CD4-positive, alpha-beta T cell (primary cell): ENCODE measurements at regions of chr1 and their contacts with region 1.

Region 1: GRCh38 chr1:179229214-179230140 is at the start of gene ABL2:
- DNase-seq: peak; percentile 11 to 74 (median 45)
- ATAC-seq: peak; percentile 63
- H3K4me3 ChIP-seq: peak within 1 kb of the TSS; percentile 57
- H3K4me3 Mint-ChIP-seq: peak within 1 kb of the TSS; percentile 98
- H3K27ac ChIP-seq: peak within 1 kb of the TSS in 1 of 2 donors; percentile 57
- H3K27ac Mint-ChIP-seq: peak within 1 kb of the TSS; percentile 82
- H3K4me1 ChIP-seq: peaks cover 11% of the 10 kb centered on the region
- H3K4me1 Mint-ChIP-seq: peaks cover 35% of the 10 kb centered on the region
- H3K27me3 ChIP-seq: no peaks in the 10 kb centered on the region
- H3K27me3 Mint-ChIP-seq: no peaks in the 10 kb centered on the region
- CTCF ChIP-seq: no peak
- total RNA-seq, gene ABL2: 15.8 to 16.4 TPM

Region 2: GRCh38 chr1:178397678-178398077 is 831.8 kb before region 1 on chr1:
- CTCF ChIA-PET with region 1: no interaction called
- POLR2A ChIA-PET with region 1: no interaction called
- intact Hi-C with region 1: no loop called
- DNase-seq: no peak
- ATAC-seq: no peak
- H3K4me3 ChIP-seq: no peak overlapping the region
- H3K4me3 Mint-ChIP-seq: no peak overlapping the region
- H3K27ac ChIP-seq: no peak overlapping the region
- H3K27ac Mint-ChIP-seq: no peak overlapping the region
- H3K4me1 ChIP-seq: no peaks in the 10 kb centered on the region
- H3K4me1 Mint-ChIP-seq: no peaks in the 10 kb centered on the region
- H3K27me3 ChIP-seq: no peaks in the 10 kb centered on the region
- H3K27me3 Mint-ChIP-seq: peaks cover 5% of the 10 kb centered on the region
- CTCF ChIP-seq: no peak

Region 3: GRCh38 chr1:178725603-178726517 is 503.6 kb before region 1 on chr1:
- CTCF ChIA-PET with region 1: no interaction called
- POLR2A ChIA-PET with region 1: no interaction called
- intact Hi-C with region 1: loop called in 1 of 2 experiments (anchors 10 kb)
- DNase-seq: peak; percentile 23 to 85 (median 57)
- ATAC-seq: peak; percentile 84
- H3K4me3 ChIP-seq: peak overlapping the region; percentile 71
- H3K4me3 Mint-ChIP-seq: peak overlapping the region; percentile 93
- H3K27ac ChIP-seq: peak overlapping the region in 1 of 2 donors; percentile 29
- H3K27ac Mint-ChIP-seq: peak overlapping the region; percentile 87
- H3K4me1 ChIP-seq: peaks cover 9% of the 10 kb centered on the region
- H3K4me1 Mint-ChIP-seq: peaks cover 39% of the 10 kb centered on the region
- H3K27me3 ChIP-seq: no peaks in the 10 kb centered on the region
- H3K27me3 Mint-ChIP-seq: no peaks in the 10 kb centered on the region
- CTCF ChIP-seq: no peak

Region 4: DNA sequence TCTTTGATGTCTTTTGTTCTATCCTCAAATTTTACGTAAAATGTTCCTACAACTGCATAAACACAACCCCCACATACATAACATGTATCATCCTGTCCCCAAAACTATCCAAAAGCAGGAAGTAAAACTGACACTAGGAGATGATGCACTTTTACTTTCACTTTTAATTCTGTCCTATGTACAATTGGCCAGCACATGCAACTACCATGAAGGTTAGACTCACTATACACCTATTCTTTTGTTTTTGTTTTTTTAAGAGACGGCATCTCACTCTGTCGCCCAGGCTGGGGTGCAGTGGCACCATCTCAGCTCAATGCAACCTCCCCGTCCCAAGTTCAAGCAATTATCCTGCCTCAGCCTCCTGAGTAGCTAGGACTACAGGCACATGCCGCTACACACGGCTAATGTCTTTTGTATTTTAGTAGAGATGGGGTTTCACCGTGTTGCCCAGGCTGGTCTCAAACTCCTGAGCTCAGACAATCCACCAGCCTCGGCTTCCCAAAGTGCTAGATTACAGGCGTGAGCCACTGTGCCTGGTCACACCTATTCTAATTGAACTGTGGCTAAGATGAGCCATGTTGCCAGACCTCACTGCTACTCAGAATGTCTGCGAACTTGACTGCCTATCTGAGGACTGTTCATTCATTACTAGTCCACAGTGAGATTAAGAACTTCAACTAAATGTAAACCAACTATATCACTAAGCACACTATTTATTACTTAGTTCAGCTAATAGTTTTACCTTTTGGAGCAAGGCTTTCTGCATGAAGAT is 99.6 kb before region 1 on chr1:
- CTCF ChIA-PET with region 1: no interaction called
- POLR2A ChIA-PET with region 1: no interaction called
- intact Hi-C with region 1: loop called in 1 of 2 experiments (anchors 5 kb)
- DNase-seq: peak in 8 of 14 experiments; percentile 12 to 89 (median 28)
- ATAC-seq: peak; percentile 95
- H3K4me3 ChIP-seq: peak overlapping the region; percentile 45
- H3K4me3 Mint-ChIP-seq: peak overlapping the region; percentile 76
- H3K27ac ChIP-seq: peak overlapping the region; percentile 60 to 78
- H3K27ac Mint-ChIP-seq: peak overlapping the region; percentile 86
- H3K4me1 ChIP-seq: peaks cover 14% of the 10 kb centered on the region
- H3K4me1 Mint-ChIP-seq: peaks cover 13% of the 10 kb centered on the region
- H3K27me3 ChIP-seq: no peaks in the 10 kb centered on the region
- H3K27me3 Mint-ChIP-seq: no peaks in the 10 kb centered on the region
- CTCF ChIP-seq: no peak

Region 5: GRCh38 chr1:180057883-180058396 is 828.5 kb after region 1 on chr1:
- CTCF ChIA-PET with region 1: no interaction called
- POLR2A ChIA-PET with region 1: no interaction called
- intact Hi-C with region 1: no loop called
- DNase-seq: no peak
- ATAC-seq: no peak
- H3K4me3 ChIP-seq: no peak overlapping the region
- H3K4me3 Mint-ChIP-seq: no peak overlapping the region
- H3K27ac ChIP-seq: no peak overlapping the region
- H3K27ac Mint-ChIP-seq: no peak overlapping the region
- H3K4me1 ChIP-seq: no peaks in the 10 kb centered on the region
- H3K4me1 Mint-ChIP-seq: no peaks in the 10 kb centered on the region
- H3K27me3 ChIP-seq: no peaks in the 10 kb centered on the region
- H3K27me3 Mint-ChIP-seq: no peaks in the 10 kb centered on the region
- CTCF ChIP-seq: no peak

Region 6: GRCh38 chr1:180154325-180155181 is 925.1 kb after region 1 on chr1 and contains the start of gene QSOX1:
- CTCF ChIA-PET with region 1: no interaction called
- POLR2A ChIA-PET with region 1: no interaction called
- intact Hi-C with region 1: loop called in 1 of 2 experiments (anchors 10 kb)
- DNase-seq: peak; percentile 80 to 97 (median 86)
- ATAC-seq: peak; percentile 97
- H3K4me3 ChIP-seq: peak within 1 kb of the TSS; percentile 90
- H3K4me3 Mint-ChIP-seq: peak within 1 kb of the TSS; percentile 95
- H3K27ac ChIP-seq: peak within 1 kb of the TSS; percentile 19 to 42
- H3K27ac Mint-ChIP-seq: peak within 1 kb of the TSS; percentile 82
- H3K4me1 ChIP-seq: peaks cover 27% of the 10 kb centered on the region
- H3K4me1 Mint-ChIP-seq: peaks cover 33% of the 10 kb centered on the region
- H3K27me3 ChIP-seq: no peaks in the 10 kb centered on the region
- H3K27me3 Mint-ChIP-seq: no peaks in the 10 kb centered on the region
- CTCF ChIP-seq: no peak
- total RNA-seq, gene QSOX1: 13.7 to 14.3 TPM